Spleen (tissue), 13 donors: ENCODE measurements at regions of chr17 and their contacts with region 1.

Region 1: GRCh38 chr17:14165616-14166015 is 71.0 kb downstream of the CDRT15 start:
- DNase-seq: no peak
- H3K4me3 ChIP-seq: no peak overlapping the region
- H3K27ac ChIP-seq: no peak overlapping the region
- H3K4me1 ChIP-seq: no peaks in the 10 kb centered on the region
- H3K27me3 ChIP-seq: no peaks in the 10 kb centered on the region
- CTCF ChIP-seq: no peak
- POLR2A ChIP-seq: no peak

Region 2: GRCh38 chr17:14101976-14102375 is 63.6 kb before region 1 on chr17:
- intact Hi-C with region 1: loop called (anchors 10 kb)
- DNase-seq: no peak
- H3K4me3 ChIP-seq: no peak overlapping the region
- H3K27ac ChIP-seq: no peak overlapping the region
- H3K4me1 ChIP-seq: peaks cover 0 to 6% (median 0%) of the 10 kb centered on the region in 6 donors
- H3K27me3 ChIP-seq: no peaks in the 10 kb centered on the region
- CTCF ChIP-seq: no peak
- POLR2A ChIP-seq: no peak